Activated naive CD4-positive, alpha-beta T cell treated with anti-CD3 and anti-CD28 coated beads for 36 hours (primary cell): ENCODE measurements at regions of chr2 and their contacts with region 1.

Region 1: GRCh38 chr2:104412384-104412783 is 441.5 kb upstream of the POU3F3 start:
- DNase-seq: peak; percentile 50
- H3K4me3 Mint-ChIP-seq: no peak overlapping the region
- H3K27ac Mint-ChIP-seq: no peak overlapping the region
- H3K4me1 Mint-ChIP-seq: no peaks in the 10 kb centered on the region
- H3K27me3 Mint-ChIP-seq: peaks cover 13% of the 10 kb centered on the region

Region 2: GRCh38 chr2:102841107-102841840 is 1571.1 kb before region 1 on chr2:
- CTCF ChIA-PET with region 1: no interaction called
- intact Hi-C with region 1: loop called (anchors 5 kb)
- DNase-seq: peak; percentile 54
- H3K4me3 Mint-ChIP-seq: no peak overlapping the region
- H3K27ac Mint-ChIP-seq: no peak overlapping the region
- H3K4me1 Mint-ChIP-seq: no peaks in the 10 kb centered on the region
- H3K27me3 Mint-ChIP-seq: no peaks in the 10 kb centered on the region

Region 3: DNA sequence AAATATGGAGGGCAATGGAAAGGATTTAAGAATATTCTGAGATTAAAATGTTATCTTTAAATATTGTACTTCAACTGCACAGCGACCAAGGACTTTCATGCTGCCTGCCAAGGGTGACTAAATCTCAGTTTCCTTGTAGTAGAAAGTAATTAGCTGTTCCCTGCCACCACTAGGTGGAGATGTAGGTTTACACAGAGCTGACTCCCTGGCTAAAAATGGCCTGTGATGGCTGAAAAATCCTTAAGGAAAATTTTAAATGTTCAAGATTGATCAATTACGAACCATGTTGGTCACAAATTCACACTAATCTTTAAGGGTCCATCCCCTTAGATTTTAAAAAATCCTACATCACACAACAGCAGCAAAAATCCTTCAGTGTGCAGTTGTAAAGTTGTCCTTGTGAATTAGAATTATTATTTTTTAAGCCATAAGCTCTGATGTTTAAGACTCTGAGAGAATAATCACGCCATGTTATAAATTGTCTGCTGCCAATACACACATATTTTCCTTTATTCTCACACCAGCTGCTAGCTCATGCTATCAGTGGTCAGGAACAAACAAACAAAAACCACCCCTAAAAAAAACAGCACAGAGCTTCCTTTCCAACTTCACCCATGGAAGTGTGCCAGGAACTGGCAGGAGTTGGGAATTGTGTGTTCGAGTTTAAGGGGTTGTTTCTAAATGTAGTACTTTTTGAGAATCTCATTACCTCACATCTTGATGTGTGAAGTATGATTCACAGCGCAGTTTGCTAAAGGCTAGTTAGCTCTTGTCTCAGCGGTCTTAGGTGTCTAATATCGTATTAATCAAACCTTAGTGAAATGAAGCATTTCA is 1250.7 kb before region 1 on chr2:
- CTCF ChIA-PET with region 1: no interaction called
- intact Hi-C with region 1: loop called (anchors 2 kb)
- DNase-seq: no peak
- H3K4me3 Mint-ChIP-seq: no peak overlapping the region
- H3K27ac Mint-ChIP-seq: no peak overlapping the region
- H3K4me1 Mint-ChIP-seq: no peaks in the 10 kb centered on the region
- H3K27me3 Mint-ChIP-seq: no peaks in the 10 kb centered on the region

Region 4: DNA sequence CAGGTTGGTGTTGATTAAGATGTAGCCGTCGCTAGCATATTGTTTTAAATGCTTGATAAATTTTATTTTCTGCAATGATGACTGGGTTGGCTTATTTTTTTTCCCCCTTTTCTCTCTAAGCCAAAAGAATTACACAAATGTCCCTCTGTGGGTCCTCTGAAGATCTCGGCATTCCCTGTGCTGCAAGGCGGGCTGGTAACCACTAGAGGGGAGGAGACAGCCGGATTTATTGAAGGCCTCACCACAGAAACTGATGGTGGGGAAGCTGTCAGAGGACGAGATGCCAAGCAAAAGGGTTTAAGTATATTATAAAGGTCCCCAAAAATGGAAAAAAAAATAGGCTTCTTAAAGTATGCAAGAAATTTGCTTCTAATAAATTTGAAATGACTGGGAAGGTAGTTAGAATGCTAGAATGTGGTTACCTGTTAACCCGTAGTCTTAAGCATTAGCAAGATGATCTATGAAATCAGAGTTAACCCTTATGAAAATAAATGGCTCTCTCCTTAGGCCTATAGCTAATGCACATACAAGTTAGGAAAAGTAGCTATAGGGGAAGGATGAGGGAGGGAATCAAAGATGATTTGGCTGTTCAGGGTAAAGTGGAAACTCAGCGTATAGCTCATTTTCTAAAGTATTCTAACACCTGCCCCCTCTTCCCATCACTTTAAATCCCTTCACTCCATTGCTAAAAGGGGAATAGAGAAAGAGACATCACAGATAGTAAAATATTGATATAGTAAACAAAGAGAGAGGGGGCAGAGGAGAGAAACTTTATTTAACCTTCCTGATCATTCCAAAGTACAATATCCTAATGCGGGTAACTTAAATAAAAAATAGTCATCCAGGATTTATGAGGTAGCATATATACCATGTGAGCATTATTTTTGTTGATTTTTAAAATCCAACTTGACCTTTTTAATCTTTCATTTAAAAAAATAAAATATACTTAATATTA is 452.9 kb before region 1 on chr2:
- CTCF ChIA-PET with region 1: no interaction called
- intact Hi-C with region 1: loop called (anchors 5 kb)
- DNase-seq: peak; percentile 11
- H3K4me3 Mint-ChIP-seq: no peak overlapping the region
- H3K27ac Mint-ChIP-seq: no peak overlapping the region
- H3K4me1 Mint-ChIP-seq: no peaks in the 10 kb centered on the region
- H3K27me3 Mint-ChIP-seq: no peaks in the 10 kb centered on the region

Region 5: DNA sequence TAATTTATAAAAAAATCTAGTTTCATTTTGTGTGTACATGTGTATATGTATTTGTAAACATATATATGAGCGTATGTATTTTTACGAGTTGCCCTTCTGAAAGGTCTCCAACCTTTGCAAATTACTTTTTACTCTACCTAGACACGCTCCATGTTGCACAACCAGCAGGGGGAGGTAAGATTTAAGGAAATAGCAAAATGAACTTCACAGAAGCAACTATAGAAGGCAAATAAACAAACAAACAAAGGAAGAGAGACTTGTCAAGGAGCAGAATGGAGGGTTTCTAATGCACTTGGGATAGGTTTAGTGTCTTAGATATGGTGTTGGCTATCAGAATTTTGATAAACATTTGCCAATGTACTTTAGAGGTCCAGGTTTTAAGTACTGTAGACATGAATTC is 379.0 kb before region 1 on chr2:
- CTCF ChIA-PET with region 1: no interaction called
- intact Hi-C with region 1: loop called (anchors 2 kb)
- DNase-seq: no peak
- H3K4me3 Mint-ChIP-seq: no peak overlapping the region
- H3K27ac Mint-ChIP-seq: no peak overlapping the region
- H3K4me1 Mint-ChIP-seq: no peaks in the 10 kb centered on the region
- H3K27me3 Mint-ChIP-seq: no peaks in the 10 kb centered on the region

Region 6: DNA sequence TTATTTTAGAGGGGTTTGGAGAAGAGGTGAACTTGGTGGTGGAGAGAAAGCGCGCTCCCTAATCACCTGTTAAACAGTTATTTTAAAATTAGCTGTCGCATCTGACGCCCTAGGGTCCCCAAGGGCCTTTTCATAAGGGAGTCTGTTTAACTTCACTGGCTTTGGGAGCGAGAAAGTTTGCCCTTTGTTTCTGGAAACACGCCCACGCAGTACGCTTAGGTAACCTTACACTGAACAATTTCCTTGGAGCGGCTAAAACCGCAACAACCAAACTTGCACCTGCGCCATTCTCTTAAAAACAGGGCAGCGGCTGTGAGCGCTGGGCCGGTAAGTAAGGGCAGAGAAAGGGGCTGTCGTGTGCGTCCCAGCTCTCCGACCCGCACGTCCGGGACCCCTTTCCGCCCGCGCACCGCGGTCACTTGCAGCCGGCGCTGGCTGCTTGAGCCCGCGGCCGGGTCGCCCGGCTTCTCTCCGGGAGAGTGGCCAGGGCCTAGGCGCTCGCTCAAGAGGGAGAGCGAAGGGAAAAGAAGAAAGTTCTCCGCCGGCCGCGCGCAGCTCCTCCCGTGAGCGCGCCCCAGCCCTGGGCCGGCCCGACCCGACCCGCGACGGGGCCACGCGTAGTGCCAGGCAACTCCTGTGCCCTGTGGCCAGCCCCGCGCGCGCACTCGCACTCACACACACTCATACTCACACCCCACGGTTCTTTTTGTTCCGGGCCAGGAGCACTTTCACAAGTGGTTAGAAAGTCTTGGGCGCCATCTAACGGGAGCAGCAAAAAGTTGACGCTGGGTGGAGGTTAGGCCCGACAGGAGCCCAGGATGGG is 460.7 kb after region 1 on chr2:
- CTCF ChIA-PET with region 1: no interaction called
- intact Hi-C with region 1: loop called (anchors 10 kb)
- DNase-seq: peak; percentile 73
- H3K4me3 Mint-ChIP-seq: peak overlapping the region; percentile 62
- H3K27ac Mint-ChIP-seq: no peak overlapping the region
- H3K4me1 Mint-ChIP-seq: peaks cover 9% of the 10 kb centered on the region
- H3K27me3 Mint-ChIP-seq: peaks cover 72% of the 10 kb centered on the region